ENCODE measurements at regions of chr14 and their contacts with region 1.

Region 1: GRCh38 chr14:77457522-77458290 is at the starts of genes AHSA1 and VIPAS39:
- DNase-seq: peak; percentile 98
- ATAC-seq: peak; percentile 91
- H3K4me3 ChIP-seq: peak within 1 kb of the TSS; percentile 72 to 99 (median 93)
- H3K4me3 Mint-ChIP-seq: peak within 1 kb of the TSS; percentile 100
- H3K27ac ChIP-seq: peak within 1 kb of the TSS; percentile 80 to 91
- H3K27ac Mint-ChIP-seq: peak within 1 kb of the TSS; percentile 99
- H3K4me1 ChIP-seq: peaks cover 21 to 24% of the 10 kb centered on the region in 2 donors
- H3K4me1 Mint-ChIP-seq: peaks cover 39% of the 10 kb centered on the region
- H3K27me3 ChIP-seq: no peaks in the 10 kb centered on the region
- H3K27me3 Mint-ChIP-seq: no peaks in the 10 kb centered on the region
- CTCF ChIP-seq: no peak
- total RNA-seq, gene AHSA1: 87.5 and 112 TPM in 2 replicates
- total RNA-seq, gene VIPAS39: 25.3 and 25.9 TPM in 2 replicates

Region 2: DNA sequence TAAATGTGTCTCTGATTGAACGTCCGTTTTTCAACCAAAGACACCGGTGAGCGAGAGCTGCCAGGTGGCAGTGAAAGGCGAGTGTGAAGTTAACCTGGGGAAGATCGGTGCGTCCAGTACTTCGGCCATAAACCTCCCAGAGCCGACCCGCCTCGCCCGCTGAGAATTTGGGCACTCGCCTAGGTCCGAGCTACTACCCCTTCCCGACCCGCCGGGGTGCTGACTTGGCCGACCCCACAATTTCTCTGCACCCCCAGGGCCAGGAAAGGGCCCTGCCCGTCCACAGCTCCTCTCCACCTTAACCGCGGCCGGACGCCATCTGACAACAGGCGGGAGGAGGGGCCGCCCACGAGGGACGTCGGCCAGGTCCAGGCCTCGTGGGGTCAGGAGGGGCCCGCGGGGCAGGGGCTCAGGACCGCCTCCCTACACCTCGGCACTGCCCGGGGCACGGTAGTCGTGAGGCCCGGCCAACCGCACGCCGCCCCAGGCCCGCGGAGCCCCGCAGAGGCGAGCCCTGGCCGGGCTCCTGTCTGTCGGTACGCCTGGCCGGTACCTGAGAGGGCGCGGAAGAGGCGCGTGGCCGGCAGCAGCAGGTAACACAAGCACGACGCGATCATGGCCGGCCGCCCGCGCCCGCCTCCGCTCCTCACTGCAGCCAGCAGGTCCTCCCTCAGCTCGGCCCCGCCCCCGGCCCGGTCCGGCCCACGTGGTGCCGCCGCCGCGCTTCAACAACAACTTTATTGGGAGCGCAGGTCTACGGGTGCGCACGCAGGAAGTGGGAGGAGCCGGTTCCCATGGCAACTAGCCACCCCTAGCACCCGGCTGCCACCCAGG is 645.3 kb before region 1 on chr14 and contains the start of gene ANGEL1:
- CTCF ChIA-PET with region 1: no interaction called
- POLR2A ChIA-PET with region 1: no interaction called
- intact Hi-C with region 1: loop called (anchors 1 kb)
- DNase-seq: peak; percentile 99
- ATAC-seq: peak; percentile 95
- H3K4me3 ChIP-seq: peak within 1 kb of the TSS; percentile 31 to 79 (median 72)
- H3K4me3 Mint-ChIP-seq: peak within 1 kb of the TSS; percentile 90
- H3K27ac ChIP-seq: peak within 1 kb of the TSS; percentile 65 to 84
- H3K27ac Mint-ChIP-seq: peak within 1 kb of the TSS; percentile 99
- H3K4me1 ChIP-seq: peaks cover 20 to 25% of the 10 kb centered on the region in 2 donors
- H3K4me1 Mint-ChIP-seq: peaks cover 28% of the 10 kb centered on the region
- H3K27me3 ChIP-seq: peaks cover 0 to 5% (median 2%) of the 10 kb centered on the region in 4 experiments
- H3K27me3 Mint-ChIP-seq: no peaks in the 10 kb centered on the region
- CTCF ChIP-seq: no peak
- total RNA-seq, gene ANGEL1: 25.2 and 27.3 TPM in 2 replicates

Region 3: GRCh38 chr14:77111043-77111442 is 346.7 kb before region 1 on chr14:
- CTCF ChIA-PET with region 1: no interaction called
- POLR2A ChIA-PET with region 1: no interaction called
- intact Hi-C with region 1: no loop called
- DNase-seq: no peak
- ATAC-seq: no peak
- H3K4me3 ChIP-seq: no peak overlapping the region
- H3K4me3 Mint-ChIP-seq: no peak overlapping the region
- H3K27ac ChIP-seq: no peak overlapping the region
- H3K27ac Mint-ChIP-seq: peak overlapping the region; percentile 26
- H3K4me1 ChIP-seq: peaks cover 4 to 5% of the 10 kb centered on the region in 2 donors
- H3K4me1 Mint-ChIP-seq: peaks cover 25% of the 10 kb centered on the region
- H3K27me3 ChIP-seq: no peaks in the 10 kb centered on the region
- H3K27me3 Mint-ChIP-seq: no peaks in the 10 kb centered on the region
- CTCF ChIP-seq: no peak

Region 4: GRCh38 chr14:77124345-77125280 is 333.1 kb before region 1 on chr14:
- CTCF ChIA-PET with region 1: interaction called, 3 read pairs
- POLR2A ChIA-PET with region 1: no interaction called
- intact Hi-C with region 1: loop called (anchors 5 kb)
- DNase-seq: peak; percentile 89
- ATAC-seq: peak; percentile 42
- H3K4me3 ChIP-seq: peak overlapping the region; percentile 32 to 79 (median 73)
- H3K4me3 Mint-ChIP-seq: peak overlapping the region; percentile 93
- H3K27ac ChIP-seq: peak overlapping the region; percentile 39 to 93
- H3K27ac Mint-ChIP-seq: peak overlapping the region; percentile 94
- H3K4me1 ChIP-seq: peaks cover 54 to 60% of the 10 kb centered on the region in 2 donors
- H3K4me1 Mint-ChIP-seq: peaks cover 59% of the 10 kb centered on the region
- H3K27me3 ChIP-seq: peaks cover 0 to 28% (median 4%) of the 10 kb centered on the region in 4 experiments
- H3K27me3 Mint-ChIP-seq: peaks cover 12% of the 10 kb centered on the region
- CTCF ChIP-seq: peak; percentile 78

Region 5: DNA sequence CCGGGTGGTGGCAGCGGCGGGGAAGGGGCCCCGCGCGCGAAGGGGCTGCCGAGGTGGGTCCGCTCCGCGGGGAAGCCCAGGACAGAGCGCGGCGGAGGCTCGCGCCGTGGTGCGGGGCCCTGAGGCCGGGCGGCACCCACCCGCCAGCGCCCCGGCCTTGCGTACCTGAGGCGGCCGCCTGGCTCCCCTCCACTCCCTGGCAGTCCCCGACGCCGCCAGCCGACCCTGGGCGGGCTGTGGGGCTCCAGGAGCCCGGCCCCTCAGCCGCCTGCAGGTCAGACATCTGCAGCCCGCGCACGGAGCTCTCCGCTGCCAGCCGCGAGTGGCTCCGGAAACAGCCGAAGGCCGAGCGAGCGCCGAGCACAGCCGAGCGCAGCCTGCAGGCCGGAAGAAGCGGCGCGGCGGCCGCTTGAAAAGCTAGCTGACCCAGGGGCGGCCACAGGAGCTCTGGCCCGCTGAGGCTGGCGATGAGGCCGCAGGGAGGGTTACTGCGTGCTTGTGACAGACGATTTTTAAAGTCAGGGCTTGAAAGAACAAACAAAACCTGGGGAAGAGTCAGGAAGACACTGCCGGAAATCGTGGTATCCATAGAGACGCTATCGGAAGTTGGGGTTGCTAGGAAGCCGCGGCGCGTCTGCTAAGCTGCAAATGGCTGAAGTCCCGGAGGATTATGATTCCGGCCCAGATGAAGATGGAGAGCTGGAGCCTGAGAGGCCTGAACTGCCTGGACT is 80.8 kb before region 1 on chr14 and contains the starts of genes SAMD15 and TMED8:
- CTCF ChIA-PET with region 1: no interaction called
- POLR2A ChIA-PET with region 1: interaction called, 9 read pairs
- intact Hi-C with region 1: loop called (anchors 1 kb)
- DNase-seq: peak; percentile 92
- ATAC-seq: peak; percentile 92
- H3K4me3 ChIP-seq: peak within 1 kb of the TSS; percentile 79 to 100 (median 93)
- H3K4me3 Mint-ChIP-seq: peak within 1 kb of the TSS; percentile 95
- H3K27ac ChIP-seq: peak within 1 kb of the TSS; percentile 18 to 85
- H3K27ac Mint-ChIP-seq: peak within 1 kb of the TSS; percentile 91
- H3K4me1 ChIP-seq: peaks cover 39 to 43% of the 10 kb centered on the region in 2 donors
- H3K4me1 Mint-ChIP-seq: peaks cover 40% of the 10 kb centered on the region
- H3K27me3 ChIP-seq: no peaks in the 10 kb centered on the region
- H3K27me3 Mint-ChIP-seq: no peaks in the 10 kb centered on the region
- CTCF ChIP-seq: peak; percentile 48
- total RNA-seq, gene SAMD15: 0.96 and 1.00 TPM in 2 replicates
- total RNA-seq, gene TMED8: 43.8 and 44.7 TPM in 2 replicates

Region 6: GRCh38 chr14:77616454-77617229 is 158.9 kb after region 1 on chr14 and contains the start of gene SPTLC2:
- CTCF ChIA-PET with region 1: no interaction called
- POLR2A ChIA-PET with region 1: no interaction called
- intact Hi-C with region 1: loop called (anchors 1 kb)
- DNase-seq: peak; percentile 99
- ATAC-seq: peak; percentile 94
- H3K4me3 ChIP-seq: peak within 1 kb of the TSS; percentile 67 to 93 (median 76)
- H3K4me3 Mint-ChIP-seq: peak within 1 kb of the TSS; percentile 95
- H3K27ac ChIP-seq: peak within 1 kb of the TSS; percentile 75 to 78
- H3K27ac Mint-ChIP-seq: peak within 1 kb of the TSS; percentile 91
- H3K4me1 ChIP-seq: peaks cover 28% of the 10 kb centered on the region in 2 donors
- H3K4me1 Mint-ChIP-seq: peaks cover 40% of the 10 kb centered on the region
- H3K27me3 ChIP-seq: no peaks in the 10 kb centered on the region
- H3K27me3 Mint-ChIP-seq: no peaks in the 10 kb centered on the region
- CTCF ChIP-seq: no peak
- total RNA-seq, gene SPTLC2: 41.4 and 52.2 TPM in 2 replicates

Region 7: GRCh38 chr14:77799863-77800730 is 342.4 kb after region 1 on chr14 and contains the start of gene ADCK1:
- CTCF ChIA-PET with region 1: no interaction called
- POLR2A ChIA-PET with region 1: no interaction called
- intact Hi-C with region 1: loop called (anchors 1 kb)
- DNase-seq: peak; percentile 90
- ATAC-seq: peak; percentile 90
- H3K4me3 ChIP-seq: peak within 1 kb of the TSS; percentile 47 to 91 (median 71)
- H3K4me3 Mint-ChIP-seq: peak within 1 kb of the TSS; percentile 92
- H3K27ac ChIP-seq: peak within 1 kb of the TSS; percentile 40 to 87
- H3K27ac Mint-ChIP-seq: peak within 1 kb of the TSS; percentile 89
- H3K4me1 ChIP-seq: peaks cover 4 to 8% of the 10 kb centered on the region in 2 donors
- H3K4me1 Mint-ChIP-seq: peaks cover 12% of the 10 kb centered on the region
- H3K27me3 ChIP-seq: no peaks in the 10 kb centered on the region
- H3K27me3 Mint-ChIP-seq: no peaks in the 10 kb centered on the region
- CTCF ChIP-seq: peak; percentile 14
- total RNA-seq, gene ADCK1: 10.6 and 13.1 TPM in 2 replicates

Measured in B cell (primary cell).